GM13976 (cell line): ENCODE measurements at regions of chr22 and their contacts with region 1.

Region 1: GRCh38 chr22:40036591-40037225 is 42.0 kb downstream of the FAM83F start:
- DNase-seq: peak; percentile 78
- CTCF ChIP-seq: peak; percentile 74

Region 2: DNA sequence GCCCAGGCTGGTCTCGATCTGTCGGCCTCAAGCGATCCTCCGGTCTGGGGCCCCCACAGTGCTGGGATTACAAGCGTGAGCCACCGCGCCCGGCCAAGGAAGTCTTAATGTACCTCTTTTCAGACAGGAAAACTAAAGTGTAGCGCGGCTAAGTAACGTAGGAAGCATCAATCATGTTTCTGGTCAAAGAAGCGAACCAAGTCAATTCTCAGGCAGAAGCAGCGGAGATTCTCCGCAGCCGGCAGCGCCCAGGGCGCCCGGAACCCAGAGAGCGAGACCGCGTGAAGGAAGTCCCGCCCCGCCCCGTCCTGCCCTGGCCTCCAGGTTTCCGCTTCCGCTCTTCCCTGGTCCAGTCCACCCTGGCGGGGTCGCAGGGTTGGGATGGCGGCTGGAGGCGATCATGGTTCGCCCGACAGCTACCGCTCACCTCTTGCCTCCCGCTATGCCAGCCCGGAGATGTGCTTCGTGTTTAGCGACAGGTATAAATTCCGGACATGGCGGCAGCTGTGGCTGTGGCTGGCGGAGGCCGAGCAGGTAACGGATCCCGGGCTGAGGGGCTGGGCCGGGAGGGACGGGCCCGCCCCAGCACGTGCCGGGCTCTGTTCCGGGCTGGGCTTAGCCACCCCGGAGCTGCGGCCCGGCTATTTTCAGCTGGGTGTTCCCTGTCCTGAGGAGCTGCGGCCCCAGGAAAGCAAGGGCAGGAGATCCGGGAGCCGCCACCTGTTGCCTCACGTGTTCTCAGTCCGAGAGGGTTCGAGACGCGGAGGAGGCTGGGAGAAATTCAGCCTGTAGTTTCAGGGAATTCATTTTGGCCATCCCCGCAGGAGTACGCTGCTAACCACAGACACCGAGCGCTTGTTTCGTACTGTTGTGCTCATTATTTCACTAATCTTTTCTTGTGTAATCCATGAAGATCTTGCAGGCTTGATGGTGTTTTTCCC is 309.7 kb after region 1 on chr22 and contains the start of gene ADSL:
- in situ Hi-C with region 1: loop called (anchors 10 kb)
- DNase-seq: peak; percentile 93
- CTCF ChIP-seq: no peak